CD8-positive, alpha-beta T cell (primary cell): ENCODE measurements at regions of chr10 and their contacts with region 1.

Region 1: DNA sequence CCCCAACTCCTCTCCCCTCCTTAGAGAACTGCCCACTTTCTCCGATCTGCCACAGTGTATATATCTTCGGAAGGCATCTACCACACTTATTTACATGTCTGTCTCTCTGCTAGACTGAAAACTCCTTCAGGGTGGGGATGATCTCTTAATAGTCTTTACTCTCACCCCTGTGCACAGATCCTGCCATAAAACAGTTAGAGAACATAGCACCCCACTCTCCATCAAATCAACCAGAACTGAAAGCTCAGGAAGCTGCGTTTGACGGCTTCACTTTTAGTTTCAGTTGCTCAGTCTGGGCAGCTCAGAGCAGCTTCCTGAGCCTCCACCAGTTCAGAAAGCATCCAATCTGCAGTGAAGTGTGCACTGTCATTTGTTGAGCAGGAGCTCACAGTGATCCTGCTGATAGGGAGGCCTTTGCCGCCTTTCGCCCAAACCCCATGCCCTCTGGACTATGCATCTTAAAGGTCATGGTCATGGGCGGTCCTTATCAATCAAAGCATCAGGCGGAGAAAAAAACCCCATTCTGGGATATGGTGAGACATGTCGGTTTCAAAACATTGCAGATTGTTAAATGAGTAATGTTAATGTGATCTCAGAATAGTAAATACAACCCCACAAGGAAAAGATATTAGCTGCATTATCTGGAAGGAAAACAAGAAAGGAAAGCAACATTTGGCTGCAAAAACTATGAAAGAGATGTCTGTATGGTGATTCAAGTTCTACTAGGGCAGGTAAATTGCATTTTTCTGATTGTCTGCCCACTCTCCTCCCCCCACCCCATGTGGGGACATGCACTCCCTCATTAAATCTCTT is 167.1 kb upstream of the ADO start:
- DNase-seq: peak; percentile 25 to 90 (median 68)
- ATAC-seq: peak; percentile 84
- H3K4me3 ChIP-seq: peak overlapping the region; percentile 48
- H3K4me3 Mint-ChIP-seq: no peak overlapping the region
- H3K27ac ChIP-seq: peak overlapping the region; percentile 77 to 88
- H3K27ac Mint-ChIP-seq: no peak overlapping the region
- H3K4me1 ChIP-seq: peaks cover 28% of the 10 kb centered on the region
- H3K4me1 Mint-ChIP-seq: peaks cover 14% of the 10 kb centered on the region
- H3K27me3 ChIP-seq: no peaks in the 10 kb centered on the region
- H3K27me3 Mint-ChIP-seq: no peaks in the 10 kb centered on the region
- CTCF ChIP-seq: no peak

Region 2: DNA sequence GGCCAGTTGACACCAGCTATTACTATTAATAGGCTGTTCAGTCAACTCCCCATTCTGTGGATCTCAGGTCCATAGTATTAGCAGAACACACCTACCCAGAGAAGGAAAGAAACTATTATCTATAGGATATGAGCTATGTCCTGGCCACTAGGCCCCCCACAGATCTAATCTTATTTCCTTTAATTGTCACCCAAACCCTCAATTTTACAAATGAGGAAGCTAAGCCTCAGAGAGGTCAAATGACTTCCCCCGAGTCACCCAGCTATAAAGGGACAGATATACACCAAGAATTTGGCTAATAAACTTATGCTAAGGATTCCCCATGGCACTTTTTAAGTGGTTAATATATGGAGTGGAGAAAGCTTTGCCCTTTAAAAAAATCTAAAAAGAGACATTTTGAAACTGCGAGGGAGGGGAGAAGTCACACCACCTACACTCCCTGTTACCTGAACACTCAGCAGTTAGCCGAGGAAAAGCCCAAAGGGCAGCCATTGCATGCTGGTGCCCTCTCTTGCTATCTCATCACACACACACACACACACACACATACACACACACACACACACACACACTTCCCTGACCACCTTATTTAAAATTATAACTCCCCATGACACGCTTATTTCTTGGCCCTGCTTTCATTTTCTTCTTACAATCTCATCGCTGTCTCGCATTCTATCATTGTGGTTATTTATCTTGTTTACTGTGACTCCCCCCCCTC is 10.1 kb after region 1 on chr10:
- CTCF ChIA-PET with region 1: interaction called, 9 read pairs
- POLR2A ChIA-PET with region 1: interaction called, 14 read pairs
- intact Hi-C with region 1: no loop called
- DNase-seq: peak in 1 of 9 experiments; percentile 16
- ATAC-seq: no peak
- H3K4me3 ChIP-seq: no peak overlapping the region
- H3K4me3 Mint-ChIP-seq: no peak overlapping the region
- H3K27ac ChIP-seq: no peak overlapping the region
- H3K27ac Mint-ChIP-seq: no peak overlapping the region
- H3K4me1 ChIP-seq: no peaks in the 10 kb centered on the region
- H3K4me1 Mint-ChIP-seq: peaks cover 9% of the 10 kb centered on the region
- H3K27me3 ChIP-seq: no peaks in the 10 kb centered on the region
- H3K27me3 Mint-ChIP-seq: no peaks in the 10 kb centered on the region
- CTCF ChIP-seq: no peak

Region 3: GRCh38 chr10:62681211-62681940 is 43.9 kb after region 1 on chr10:
- CTCF ChIA-PET with region 1: no interaction called
- POLR2A ChIA-PET with region 1: interaction called, 4 read pairs
- intact Hi-C with region 1: loop called in 1 of 2 experiments (anchors 2 kb)
- DNase-seq: peak; percentile 18 to 94 (median 57)
- ATAC-seq: peak; percentile 94
- H3K4me3 ChIP-seq: no peak overlapping the region
- H3K4me3 Mint-ChIP-seq: no peak overlapping the region
- H3K27ac ChIP-seq: peak overlapping the region in 1 of 2 experiments; percentile 20
- H3K27ac Mint-ChIP-seq: peak overlapping the region; percentile 58
- H3K4me1 ChIP-seq: peaks cover 14% of the 10 kb centered on the region
- H3K4me1 Mint-ChIP-seq: peaks cover 23% of the 10 kb centered on the region
- H3K27me3 ChIP-seq: no peaks in the 10 kb centered on the region
- H3K27me3 Mint-ChIP-seq: peaks cover 6% of the 10 kb centered on the region
- CTCF ChIP-seq: no peak

Region 4: DNA sequence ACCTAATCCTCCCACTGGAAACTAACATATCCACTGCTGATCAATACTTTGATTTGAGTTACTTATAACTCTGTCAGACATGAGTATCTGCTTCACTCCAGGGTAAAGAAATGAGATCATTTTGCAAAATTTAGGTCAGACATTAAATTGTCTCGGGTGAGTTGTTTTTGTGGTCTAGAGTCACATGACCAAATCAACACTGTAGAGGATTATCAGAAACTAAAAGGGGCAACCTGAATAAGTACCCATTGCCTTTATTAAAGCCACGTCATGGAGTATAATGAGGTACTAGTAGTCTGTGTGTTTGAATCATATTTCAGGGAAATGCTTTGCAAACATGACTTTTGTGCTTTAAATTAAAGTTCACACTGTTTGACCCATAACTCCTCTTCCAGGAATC is 59.3 kb after region 1 on chr10:
- CTCF ChIA-PET with region 1: no interaction called
- POLR2A ChIA-PET with region 1: no interaction called
- intact Hi-C with region 1: loop called in 1 of 2 experiments (anchors 5 kb)
- DNase-seq: peak in 2 of 9 experiments; percentile 26 to 36
- ATAC-seq: peak; percentile 54
- H3K4me3 ChIP-seq: no peak overlapping the region
- H3K4me3 Mint-ChIP-seq: no peak overlapping the region
- H3K27ac ChIP-seq: no peak overlapping the region
- H3K27ac Mint-ChIP-seq: no peak overlapping the region
- H3K4me1 ChIP-seq: peaks cover 12% of the 10 kb centered on the region
- H3K4me1 Mint-ChIP-seq: peaks cover 29% of the 10 kb centered on the region
- H3K27me3 ChIP-seq: no peaks in the 10 kb centered on the region
- H3K27me3 Mint-ChIP-seq: no peaks in the 10 kb centered on the region
- CTCF ChIP-seq: no peak

Region 5: DNA sequence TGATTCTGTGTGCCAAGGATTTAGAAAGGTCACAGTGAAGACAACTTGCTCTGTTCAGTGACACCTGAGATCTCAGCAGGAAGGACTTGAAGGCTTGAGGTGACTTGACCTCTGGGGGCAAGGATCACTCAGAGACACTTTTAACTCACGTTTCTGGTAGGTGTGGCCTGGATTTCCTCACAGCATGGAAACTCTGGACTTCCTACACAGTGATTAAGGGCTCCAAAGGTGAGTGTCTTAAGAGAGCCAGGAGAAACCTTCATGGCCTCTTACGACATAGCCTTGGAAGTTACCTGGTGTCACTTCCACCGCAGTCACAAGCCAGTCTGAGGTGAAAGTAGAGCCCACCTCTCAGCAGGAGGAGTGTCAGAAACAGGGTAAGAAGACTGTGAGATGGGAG is 128.9 kb after region 1 on chr10:
- CTCF ChIA-PET with region 1: no interaction called
- POLR2A ChIA-PET with region 1: no interaction called
- intact Hi-C with region 1: no loop called
- DNase-seq: no peak
- ATAC-seq: no peak
- H3K4me3 ChIP-seq: no peak overlapping the region
- H3K4me3 Mint-ChIP-seq: no peak overlapping the region
- H3K27ac ChIP-seq: no peak overlapping the region
- H3K27ac Mint-ChIP-seq: no peak overlapping the region
- H3K4me1 ChIP-seq: peaks cover 9% of the 10 kb centered on the region
- H3K4me1 Mint-ChIP-seq: peaks cover 9% of the 10 kb centered on the region
- H3K27me3 ChIP-seq: no peaks in the 10 kb centered on the region
- H3K27me3 Mint-ChIP-seq: no peaks in the 10 kb centered on the region
- CTCF ChIP-seq: no peak

Region 6: GRCh38 chr10:62804356-62805230 is 167.1 kb after region 1 on chr10 and contains the start of gene ADO:
- CTCF ChIA-PET with region 1: interaction called, 4 read pairs
- POLR2A ChIA-PET with region 1: interaction called, 8 read pairs
- intact Hi-C with region 1: loop called (anchors 1 to 2 kb)
- DNase-seq: peak; percentile 52 to 90 (median 78)
- ATAC-seq: peak; percentile 88
- H3K4me3 ChIP-seq: peak within 1 kb of the TSS; percentile 88 to 89
- H3K4me3 Mint-ChIP-seq: peak within 1 kb of the TSS; percentile 97
- H3K27ac ChIP-seq: peak within 1 kb of the TSS; percentile 76 to 98
- H3K27ac Mint-ChIP-seq: peak within 1 kb of the TSS; percentile 99
- H3K4me1 ChIP-seq: peaks cover 29% of the 10 kb centered on the region
- H3K4me1 Mint-ChIP-seq: peaks cover 40% of the 10 kb centered on the region
- H3K27me3 ChIP-seq: no peaks in the 10 kb centered on the region
- H3K27me3 Mint-ChIP-seq: no peaks in the 10 kb centered on the region
- CTCF ChIP-seq: no peak
- total RNA-seq, gene ADO: 12.7 to 13.1 TPM

Region 7: DNA sequence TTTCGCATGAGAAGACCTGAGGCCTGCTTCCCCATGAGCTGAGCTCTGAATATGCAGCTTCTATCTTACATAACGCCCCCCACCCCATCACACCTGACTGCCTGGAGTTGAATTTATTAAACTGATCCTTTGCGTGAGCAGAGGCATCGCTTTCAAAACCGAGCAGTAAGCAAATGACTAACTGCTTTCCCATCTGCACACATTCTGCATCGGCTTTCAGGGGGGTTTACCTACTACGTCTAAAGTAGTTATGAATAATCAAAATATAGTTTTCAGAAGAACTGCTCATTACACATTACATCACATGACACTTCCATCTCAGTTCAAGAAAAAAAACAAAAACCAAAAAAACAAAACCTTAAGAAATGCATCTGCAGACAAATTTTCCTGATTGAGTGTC is 233.4 kb after region 1 on chr10:
- CTCF ChIA-PET with region 1: no interaction called
- POLR2A ChIA-PET with region 1: no interaction called
- intact Hi-C with region 1: no loop called
- DNase-seq: no peak
- ATAC-seq: no peak
- H3K4me3 ChIP-seq: no peak overlapping the region
- H3K4me3 Mint-ChIP-seq: no peak overlapping the region
- H3K27ac ChIP-seq: no peak overlapping the region
- H3K27ac Mint-ChIP-seq: no peak overlapping the region
- H3K4me1 ChIP-seq: no peaks in the 10 kb centered on the region
- H3K4me1 Mint-ChIP-seq: no peaks in the 10 kb centered on the region
- H3K27me3 ChIP-seq: no peaks in the 10 kb centered on the region
- H3K27me3 Mint-ChIP-seq: peaks cover 9% of the 10 kb centered on the region
- CTCF ChIP-seq: no peak

Region 8: GRCh38 chr10:63133056-63133820 is 495.8 kb after region 1 on chr10 and contains the start of gene NRBF2:
- CTCF ChIA-PET with region 1: interaction called, 3 read pairs
- POLR2A ChIA-PET with region 1: interaction called, 4 read pairs
- intact Hi-C with region 1: loop called (anchors 5 to 10 kb)
- DNase-seq: peak; percentile 94 to 99 (median 97)
- ATAC-seq: peak; percentile 91
- H3K4me3 ChIP-seq: peak within 1 kb of the TSS; percentile 96 to 97
- H3K4me3 Mint-ChIP-seq: peak within 1 kb of the TSS; percentile 91
- H3K27ac ChIP-seq: peak within 1 kb of the TSS; percentile 96 to 98
- H3K27ac Mint-ChIP-seq: peak within 1 kb of the TSS; percentile 97
- H3K4me1 ChIP-seq: peaks cover 41% of the 10 kb centered on the region
- H3K4me1 Mint-ChIP-seq: peaks cover 37% of the 10 kb centered on the region
- H3K27me3 ChIP-seq: no peaks in the 10 kb centered on the region
- H3K27me3 Mint-ChIP-seq: peaks cover 5% of the 10 kb centered on the region
- CTCF ChIP-seq: peak; percentile 22
- total RNA-seq, gene NRBF2: 26.6 to 29.1 TPM

Region 9: DNA sequence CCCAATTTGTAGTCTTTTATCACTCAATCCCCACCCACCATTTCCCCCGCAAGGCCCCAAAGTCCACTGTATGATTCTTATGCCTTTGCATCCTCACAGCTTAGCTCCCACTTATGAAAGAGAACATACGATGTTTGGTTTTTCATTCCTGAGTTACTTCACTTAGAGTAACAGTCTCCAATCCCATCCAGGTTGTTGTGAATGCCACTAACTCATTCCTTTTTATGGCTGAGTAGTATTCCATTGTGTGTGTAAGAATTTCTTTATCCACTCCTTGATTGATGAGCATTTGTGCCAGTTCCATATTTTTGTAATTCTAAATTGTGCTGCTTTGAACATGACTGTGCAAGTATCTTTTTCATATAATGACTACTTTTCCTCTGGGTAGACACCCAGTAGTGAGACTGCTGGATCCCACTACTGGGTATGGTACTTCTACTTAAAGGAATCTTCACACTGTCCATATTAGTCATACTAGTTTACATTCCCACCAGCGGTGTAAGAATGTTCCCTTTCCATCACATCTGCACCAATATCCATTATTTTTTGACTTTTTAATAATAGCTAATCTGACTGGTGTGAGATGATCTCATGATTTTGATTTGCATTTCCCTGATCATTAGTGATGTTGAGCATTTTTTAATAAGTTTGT is 675.7 kb after region 1 on chr10:
- CTCF ChIA-PET with region 1: no interaction called
- POLR2A ChIA-PET with region 1: no interaction called
- intact Hi-C with region 1: no loop called
- DNase-seq: no peak
- ATAC-seq: no peak
- H3K4me3 ChIP-seq: no peak overlapping the region
- H3K4me3 Mint-ChIP-seq: no peak overlapping the region
- H3K27ac ChIP-seq: no peak overlapping the region
- H3K27ac Mint-ChIP-seq: no peak overlapping the region
- H3K4me1 ChIP-seq: no peaks in the 10 kb centered on the region
- H3K4me1 Mint-ChIP-seq: peaks cover 8% of the 10 kb centered on the region
- H3K27me3 ChIP-seq: no peaks in the 10 kb centered on the region
- H3K27me3 Mint-ChIP-seq: no peaks in the 10 kb centered on the region
- CTCF ChIP-seq: no peak